Gastrocnemius medialis (tissue), 4 donors: ENCODE measurements at regions of chr1 and their contacts with region 1.

Region 1: DNA sequence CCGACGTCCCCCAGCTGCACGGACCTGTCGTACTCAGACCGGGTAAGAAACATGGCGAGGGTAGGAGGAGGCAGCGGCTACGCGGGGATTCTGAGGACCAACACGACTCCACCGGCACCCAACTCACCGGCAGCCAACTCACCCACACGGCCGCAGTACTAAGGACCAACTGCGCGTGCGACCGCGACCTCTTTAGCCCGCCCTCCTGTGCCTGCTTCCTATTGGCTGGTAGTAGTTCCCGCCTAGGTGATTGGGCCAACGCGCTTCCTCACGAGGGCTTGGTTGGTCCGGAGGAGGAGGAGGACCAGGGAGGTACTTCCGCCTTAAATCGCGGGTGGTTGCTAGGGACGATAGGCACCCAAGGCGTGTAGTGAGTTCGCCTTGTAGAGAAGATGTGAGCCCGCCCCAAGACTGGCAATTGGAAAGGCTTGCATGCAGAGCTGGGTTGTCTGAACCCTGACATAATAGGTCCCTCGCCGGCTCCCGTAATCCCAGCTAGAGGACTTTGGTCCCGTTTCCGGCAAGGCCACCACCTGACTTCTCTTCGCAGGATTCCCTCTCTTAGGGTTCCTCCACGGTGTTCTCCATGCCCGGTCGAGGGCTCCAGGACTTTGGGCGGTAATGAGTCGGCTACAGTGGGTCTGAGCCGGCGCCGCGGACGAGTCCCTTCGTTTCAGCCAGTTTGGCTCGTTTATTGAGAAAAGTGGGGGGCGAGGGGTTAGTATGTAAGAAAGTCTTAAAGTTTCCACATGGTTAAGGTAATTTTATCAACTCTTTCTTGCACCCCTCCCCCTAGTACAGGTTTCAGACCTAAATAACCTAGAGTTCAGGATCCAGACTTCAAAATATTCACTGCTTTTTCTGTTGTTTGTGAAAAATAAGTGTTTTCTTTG is at the start of gene PSMA5:
- DNase-seq: peak; percentile 99
- ATAC-seq: peak; percentile 96 to 98
- H3K4me3 ChIP-seq: peak within 1 kb of the TSS; percentile 86 to 90 (median 88)
- H3K27ac ChIP-seq: peak within 1 kb of the TSS; percentile 89 to 97 (median 95)
- H3K4me1 ChIP-seq: peaks cover 35 to 42% of the 10 kb centered on the region in 2 donors
- H3K27me3 ChIP-seq: no peaks in the 10 kb centered on the region
- CTCF ChIP-seq: no peak
- POLR2A ChIP-seq: peak; percentile 94 to 97
- total RNA-seq, gene PSMA5: 63.5 to 82.5 (median 78.2) TPM

Region 2: GRCh38 chr1:109213785-109214468 is 212.6 kb before region 1 on chr1 and contains the start of gene SARS1:
- in situ Hi-C with region 1: no loop called
- intact Hi-C with region 1: loop called (anchors 2 kb)
- DNase-seq: peak; percentile 79 to 83
- ATAC-seq: peak; percentile 91 to 92
- H3K4me3 ChIP-seq: peak within 1 kb of the TSS; percentile 80 to 98 (median 87)
- H3K27ac ChIP-seq: peak within 1 kb of the TSS; percentile 89 to 97 (median 94)
- H3K4me1 ChIP-seq: peaks cover 18 to 25% of the 10 kb centered on the region in 2 donors
- H3K27me3 ChIP-seq: no peaks in the 10 kb centered on the region
- CTCF ChIP-seq: no peak
- POLR2A ChIP-seq: peak; percentile 85 to 94
- total RNA-seq, gene SARS1: 97.6 to 116 (median 98.7) TPM

Region 3: DNA sequence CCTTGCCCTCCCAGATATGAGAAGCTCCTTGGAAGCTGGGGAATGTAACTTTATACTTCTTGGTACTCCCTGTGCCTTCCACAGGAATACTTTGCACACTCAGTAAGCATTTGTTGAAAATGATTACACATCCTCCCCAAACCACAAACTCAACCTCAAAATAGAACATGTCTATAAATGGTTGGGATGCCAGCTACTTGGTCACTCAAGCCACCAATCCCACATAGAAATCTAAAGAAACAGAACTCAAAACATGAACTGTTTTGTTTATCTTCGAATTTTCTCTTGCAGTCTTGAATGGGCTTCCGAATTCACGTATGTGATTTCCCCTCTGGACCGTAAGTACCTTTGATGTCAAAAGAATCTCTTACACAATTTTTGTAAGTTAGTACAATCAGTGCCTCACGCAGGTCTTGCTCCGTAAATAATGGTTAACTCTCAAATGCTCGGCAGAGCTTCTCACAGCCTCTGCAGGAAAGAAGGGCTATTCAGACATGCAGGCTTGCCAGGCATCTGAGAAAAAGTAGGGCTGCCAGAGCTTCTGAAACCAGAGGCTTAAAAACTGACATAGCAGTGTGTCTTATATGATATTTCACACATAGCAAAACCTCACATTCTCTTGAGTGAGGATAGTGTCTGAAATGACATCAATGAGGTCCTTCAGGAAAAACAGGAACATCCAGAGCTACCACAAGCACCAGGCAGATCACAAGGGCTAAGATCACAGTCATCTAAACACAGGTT is 55.6 kb before region 1 on chr1:
- in situ Hi-C with region 1: no loop called
- intact Hi-C with region 1: no loop called
- DNase-seq: peak; percentile 37 to 54
- ATAC-seq: peak; percentile 85
- H3K4me3 ChIP-seq: peak overlapping the region; percentile 18 to 45 (median 32)
- H3K27ac ChIP-seq: peak overlapping the region; percentile 92 to 97 (median 93)
- H3K4me1 ChIP-seq: peaks cover 52 to 56% of the 10 kb centered on the region in 2 donors
- H3K27me3 ChIP-seq: no peaks in the 10 kb centered on the region
- CTCF ChIP-seq: no peak
- POLR2A ChIP-seq: peak in 1 of 2 donors; percentile 48

Region 4: DNA sequence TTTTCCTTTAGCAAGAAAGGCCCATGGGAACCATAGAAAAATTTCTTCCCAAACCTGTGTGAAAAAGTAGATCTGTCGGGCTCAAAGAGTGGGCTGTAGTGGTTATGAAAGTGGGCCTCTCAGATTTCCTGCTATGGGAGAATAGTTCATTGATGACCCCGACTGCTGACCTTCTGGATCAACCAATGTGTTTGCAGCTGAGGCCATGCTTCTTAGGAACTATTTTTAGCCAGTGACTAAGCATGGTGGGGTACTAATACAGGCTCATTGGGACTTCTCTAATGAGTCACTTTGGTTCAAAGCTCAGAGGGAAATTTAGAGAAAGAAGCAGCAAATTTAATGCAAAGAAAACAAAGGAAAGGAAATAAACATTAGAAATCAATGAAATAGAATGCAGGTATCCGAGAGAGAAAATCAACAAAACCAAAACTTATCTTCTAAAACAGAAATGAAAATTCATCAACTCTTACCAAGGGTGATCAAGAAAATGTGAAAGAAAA is 12.3 kb after region 1 on chr1:
- in situ Hi-C with region 1: no loop called
- intact Hi-C with region 1: no loop called
- DNase-seq: peak in 1 of 2 donors; percentile 33
- ATAC-seq: peak; percentile 89 to 99
- H3K4me3 ChIP-seq: no peak overlapping the region
- H3K27ac ChIP-seq: peak overlapping the region; percentile 9 to 65 (median 53)
- H3K4me1 ChIP-seq: peaks cover 12% of the 10 kb centered on the region in 2 donors
- H3K27me3 ChIP-seq: peaks cover 0 to 5% (median 0%) of the 10 kb centered on the region in 3 donors
- CTCF ChIP-seq: no peak
- POLR2A ChIP-seq: no peak

Region 5: DNA sequence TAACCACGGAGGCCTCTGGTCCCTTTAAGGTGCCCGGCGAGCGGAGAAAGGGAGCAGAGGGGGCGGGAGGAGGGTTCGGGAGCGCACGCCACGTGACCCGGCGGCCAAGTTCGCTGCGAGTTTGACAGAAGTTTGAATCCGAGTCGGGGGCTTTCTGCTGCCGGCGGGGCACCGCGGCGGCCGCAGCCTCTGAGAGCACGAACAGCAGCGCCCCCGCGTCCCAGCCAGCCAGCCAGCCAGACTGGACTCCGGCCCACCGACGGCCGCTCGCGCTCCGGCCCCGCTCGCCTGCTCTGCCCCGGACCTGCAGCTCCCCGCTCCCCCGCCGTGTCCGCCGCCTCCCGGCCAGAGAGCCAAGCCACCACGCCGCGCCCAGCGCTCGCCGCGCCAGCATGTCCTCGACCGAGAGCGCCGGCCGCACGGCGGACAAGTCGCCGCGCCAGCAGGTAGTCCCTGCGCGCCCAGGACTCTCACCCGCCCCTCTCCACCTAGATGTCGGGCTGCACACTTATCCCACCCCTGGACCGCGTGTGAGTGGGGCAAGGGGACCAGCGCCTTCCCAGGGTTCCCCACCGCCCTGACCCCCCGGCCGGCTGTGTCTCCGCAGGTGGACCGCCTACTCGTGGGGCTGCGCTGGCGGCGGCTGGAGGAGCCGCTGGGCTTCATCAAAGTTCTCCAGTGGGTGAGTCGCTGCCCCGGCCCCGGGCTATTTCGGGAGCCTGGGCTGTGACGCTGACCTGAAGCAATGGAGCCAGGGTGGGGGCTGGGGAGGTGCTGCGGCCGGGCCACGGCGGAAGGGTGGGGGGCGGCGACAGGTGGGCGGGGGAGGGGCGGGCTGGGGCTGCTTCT is 40.2 kb after region 1 on chr1 and contains the start of gene SYPL2:
- in situ Hi-C with region 1: no loop called
- intact Hi-C with region 1: loop called (anchors 1 kb)
- DNase-seq: peak in 1 of 2 donors; percentile 83
- ATAC-seq: peak; percentile 61 to 71
- H3K4me3 ChIP-seq: peak within 1 kb of the TSS; percentile 66 to 96 (median 78)
- H3K27ac ChIP-seq: peak within 1 kb of the TSS; percentile 93 to 100 (median 97)
- H3K4me1 ChIP-seq: peaks cover 46 to 47% of the 10 kb centered on the region in 2 donors
- H3K27me3 ChIP-seq: no peaks in the 10 kb centered on the region
- CTCF ChIP-seq: peak in 3 of 5 experiments; percentile 8 to 14 (median 9)
- POLR2A ChIP-seq: peak; percentile 73 to 91
- total RNA-seq, gene SYPL2: 15.7 to 127 (median 83.7) TPM